H1 (cell line): ENCODE measurements at regions of chr19 and their contacts with region 1.

Region 1: DNA sequence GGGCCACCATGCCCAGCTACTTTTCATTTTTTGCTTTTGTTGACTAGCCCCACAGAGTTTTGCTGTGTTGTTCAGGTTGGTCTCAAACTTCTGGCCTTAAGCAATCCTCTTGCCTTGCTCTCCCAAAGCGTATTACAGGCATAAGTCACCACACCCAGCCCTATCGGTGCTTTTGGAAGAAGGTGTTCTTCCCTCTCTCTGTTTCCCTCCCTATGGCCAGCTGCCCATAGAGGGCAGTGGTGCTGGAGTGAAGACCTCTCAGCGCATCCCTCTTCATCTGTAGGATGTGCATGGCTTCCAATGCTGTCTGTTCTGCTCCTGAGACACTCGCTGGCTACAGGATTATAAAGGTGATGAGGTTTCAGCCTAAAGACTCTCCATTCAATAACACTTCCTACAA is 1.3 kb upstream of the CD22 start:
- DNase-seq: no peak
- H3K4me3 ChIP-seq: no peak overlapping the region
- H3K27ac ChIP-seq: no peak overlapping the region
- H3K4me1 ChIP-seq: no peaks in the 10 kb centered on the region; a peak in 1 of 7 replicates
- H3K27me3 ChIP-seq: no peaks in the 10 kb centered on the region
- CTCF ChIP-seq: peak; percentile 42 to 73 (median 71); a peak in 3 of 4 replicates
- EP300 ChIP-seq: no peak
- POLR2A ChIP-seq: no peak
- RAD21 ChIP-seq: peak; percentile 35 to 39; a peak in 3 of 4 replicates

Region 2: DNA sequence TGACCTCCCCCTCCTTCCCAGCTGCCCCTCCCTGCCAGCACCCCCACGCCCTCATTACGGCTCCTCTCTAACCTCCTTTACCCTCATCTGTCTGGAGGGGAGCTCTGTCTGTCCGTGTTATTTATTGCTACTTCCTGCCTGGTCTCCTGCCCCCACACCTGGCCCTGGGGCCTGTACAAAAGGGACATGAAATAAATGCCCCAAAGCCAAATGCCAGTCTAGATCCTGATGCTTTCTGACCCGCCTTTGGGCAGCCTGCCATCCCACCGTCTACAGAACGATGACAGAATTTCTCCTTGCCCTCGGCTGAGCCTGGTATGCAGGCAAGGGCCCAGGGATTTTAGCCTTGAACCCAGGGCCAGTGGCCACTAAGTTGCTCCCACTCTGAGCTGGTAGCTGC is 14.0 kb before region 1 on chr19:
- CTCF ChIA-PET with region 1: interaction called, 20 read pairs
- POLR2A ChIA-PET with region 1: no interaction called
- DNase-seq: no peak
- H3K4me3 ChIP-seq: no peak overlapping the region
- H3K27ac ChIP-seq: no peak overlapping the region
- H3K4me1 ChIP-seq: no peaks in the 10 kb centered on the region
- H3K27me3 ChIP-seq: no peaks in the 10 kb centered on the region
- CTCF ChIP-seq: no peak
- EP300 ChIP-seq: no peak
- POLR2A ChIP-seq: no peak
- RAD21 ChIP-seq: no peak